HCT116 (cell line): ENCODE measurements at regions of chrX and their contacts with region 1.

Region 1: DNA sequence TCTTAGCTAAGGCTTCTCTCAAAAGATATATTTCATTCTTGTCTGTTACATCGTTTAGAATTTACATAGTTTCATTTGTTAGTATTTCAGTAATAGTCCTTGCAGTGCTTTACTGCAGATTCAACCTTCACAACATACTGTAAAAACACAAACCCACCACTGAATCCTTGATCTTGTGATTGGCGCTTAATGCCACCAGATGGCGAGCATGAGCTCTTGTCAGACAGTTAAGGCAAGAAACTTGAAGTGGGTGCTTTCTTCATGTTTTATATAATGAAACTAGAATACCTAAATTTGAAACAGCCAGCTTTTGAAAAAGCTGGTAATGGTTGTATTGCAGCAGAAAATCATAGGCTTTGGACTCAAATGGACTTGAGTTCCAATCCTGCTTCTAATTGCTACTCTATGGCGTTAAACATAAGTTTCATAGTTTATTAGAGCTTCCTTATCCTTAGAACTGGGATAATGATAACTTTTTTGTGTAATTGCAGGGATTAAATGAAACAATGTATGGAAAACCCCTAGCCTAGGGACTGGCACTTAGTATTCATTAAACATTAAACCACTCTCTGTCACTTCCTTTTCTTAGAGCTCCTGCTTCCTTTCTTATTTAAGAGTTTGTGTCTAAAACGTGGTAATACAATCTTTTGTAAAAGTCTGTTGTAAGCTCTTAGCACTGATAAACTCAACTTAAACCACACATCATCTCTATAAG is 95.1 kb downstream of the USP9X start:
- DNase-seq: peak; percentile 26
- ATAC-seq: no peak
- H3K4me3 ChIP-seq: no peak overlapping the region
- H3K27ac ChIP-seq: no peak overlapping the region
- H3K4me1 ChIP-seq: no peaks in the 10 kb centered on the region
- H3K27me3 ChIP-seq: no peaks in the 10 kb centered on the region
- CTCF ChIP-seq: peak in 2 of 3 experiments; percentile 59; a peak in 4 of 6 replicates
- POLR2A ChIP-seq: no peak
- RAD21 ChIP-seq: peak; percentile 37

Region 2: GRCh38 chrX:41167888-41168287 is 12.5 kb before region 1 on chrX:
- CTCF ChIA-PET with region 1: interaction called, 10 read pairs
- POLR2A ChIA-PET with region 1: no interaction called
- RAD21 ChIA-PET with region 1: no interaction called
- intact Hi-C with region 1: no loop called
- DNase-seq: no peak
- ATAC-seq: no peak
- H3K4me3 ChIP-seq: no peak overlapping the region
- H3K27ac ChIP-seq: no peak overlapping the region
- H3K4me1 ChIP-seq: no peaks in the 10 kb centered on the region
- H3K27me3 ChIP-seq: no peaks in the 10 kb centered on the region
- CTCF ChIP-seq: no peak
- POLR2A ChIP-seq: no peak
- RAD21 ChIP-seq: no peak

Region 3: GRCh38 chrX:41258226-41258625 is 77.9 kb after region 1 on chrX:
- CTCF ChIA-PET with region 1: no interaction called
- POLR2A ChIA-PET with region 1: no interaction called
- RAD21 ChIA-PET with region 1: no interaction called
- intact Hi-C with region 1: loop called (anchors 1 kb)
- DNase-seq: no peak
- ATAC-seq: no peak
- H3K4me3 ChIP-seq: no peak overlapping the region
- H3K27ac ChIP-seq: no peak overlapping the region
- H3K4me1 ChIP-seq: peaks cover 0 to 3% of the 10 kb centered on the region in 2 experiments; a peak in 1 of 4 replicates
- H3K27me3 ChIP-seq: no peaks in the 10 kb centered on the region
- CTCF ChIP-seq: no peak
- POLR2A ChIP-seq: no peak
- RAD21 ChIP-seq: no peak